Caco-2 (cell line): ENCODE measurements at regions of chr16 and their contacts with region 1.

Region 1: GRCh38 chr16:81444448-81445121 is at the start of gene CMIP:
- DNase-seq: peak; percentile 89 to 96
- H3K4me3 ChIP-seq: peak within 1 kb of the TSS; percentile 92
- H3K4me3 Mint-ChIP-seq: peak within 1 kb of the TSS; percentile 84
- H3K27ac Mint-ChIP-seq: peak within 1 kb of the TSS; percentile 93
- H3K4me1 ChIP-seq: peaks cover 55% of the 10 kb centered on the region
- H3K4me1 Mint-ChIP-seq: peaks cover 34% of the 10 kb centered on the region
- H3K27me3 ChIP-seq: no peaks in the 10 kb centered on the region
- H3K27me3 Mint-ChIP-seq: no peaks in the 10 kb centered on the region
- CTCF ChIP-seq: no peak
- total RNA-seq, gene CMIP: 63.7 and 68.0 TPM in 2 replicates

Region 2: DNA sequence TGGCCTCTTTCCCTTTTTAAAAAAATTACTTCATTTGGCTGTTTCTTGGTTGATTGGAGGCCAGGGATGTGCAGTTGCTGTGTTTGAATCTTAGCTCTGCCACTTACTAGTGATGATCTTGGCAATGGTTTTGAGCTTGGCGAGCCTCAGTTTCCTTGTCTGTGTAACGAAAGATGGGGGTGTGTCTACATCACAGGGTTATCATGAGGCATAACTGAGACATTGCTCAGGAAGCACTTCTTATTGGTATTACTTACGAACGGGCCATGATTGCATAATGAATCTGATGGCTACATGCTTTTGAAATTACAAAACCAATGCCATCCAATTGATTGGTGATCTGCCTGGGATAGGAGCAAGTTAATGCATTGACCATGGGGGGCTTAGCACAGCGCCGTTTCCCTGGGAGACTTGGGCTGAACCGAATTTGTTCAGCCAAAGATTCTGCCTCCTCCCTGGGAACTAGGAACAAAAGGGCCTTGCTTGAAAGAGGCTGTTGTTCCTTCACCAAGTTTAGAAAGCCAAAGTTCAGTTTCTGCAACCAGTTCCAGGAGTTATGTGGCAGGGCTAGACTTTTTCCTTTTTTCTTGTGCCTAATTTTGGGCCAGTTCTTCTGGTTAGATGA is 21.9 kb after region 1 on chr16:
- CTCF ChIA-PET with region 1: no interaction called
- POLR2A ChIA-PET with region 1: no interaction called
- intact Hi-C with region 1: no loop called
- DNase-seq: no peak
- H3K4me3 ChIP-seq: no peak overlapping the region
- H3K4me3 Mint-ChIP-seq: no peak overlapping the region
- H3K27ac Mint-ChIP-seq: peak overlapping the region; percentile 64
- H3K4me1 ChIP-seq: peaks cover 9% of the 10 kb centered on the region
- H3K4me1 Mint-ChIP-seq: peaks cover 40% of the 10 kb centered on the region
- H3K27me3 ChIP-seq: no peaks in the 10 kb centered on the region
- H3K27me3 Mint-ChIP-seq: no peaks in the 10 kb centered on the region
- CTCF ChIP-seq: no peak

Region 3: DNA sequence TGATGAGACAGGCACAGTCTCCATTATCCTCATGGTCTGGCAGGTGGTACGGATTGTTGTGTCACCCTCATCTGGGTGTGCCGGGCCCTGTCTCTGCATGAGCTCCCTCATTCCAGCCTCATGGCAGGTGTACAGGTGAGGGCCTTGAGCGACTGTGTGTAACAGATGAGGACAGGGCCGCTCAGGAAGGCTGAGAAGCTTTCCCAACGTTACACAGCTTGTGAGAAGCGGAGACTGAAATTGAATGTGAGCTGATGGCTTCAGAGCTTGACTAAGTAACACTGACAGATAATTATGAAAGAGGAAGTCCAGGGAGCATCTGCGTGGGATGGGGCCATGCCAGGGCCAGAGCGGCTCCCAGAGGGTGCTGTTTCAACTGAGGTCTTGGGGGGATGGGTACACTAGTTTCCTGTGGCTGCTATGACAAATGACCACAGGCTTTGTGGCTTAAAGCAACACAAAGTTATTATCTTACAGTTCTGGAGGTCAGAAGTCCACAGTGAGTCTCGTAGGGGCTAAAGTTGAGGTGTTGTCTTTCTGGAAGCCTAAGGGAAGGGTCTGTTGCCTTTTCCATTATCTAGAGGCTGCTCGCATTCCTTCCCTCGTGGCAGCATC is 36.7 kb after region 1 on chr16:
- CTCF ChIA-PET with region 1: no interaction called
- POLR2A ChIA-PET with region 1: no interaction called
- intact Hi-C with region 1: loop called (anchors 5 kb)
- DNase-seq: peak; percentile 28 to 61
- H3K4me3 ChIP-seq: no peak overlapping the region
- H3K4me3 Mint-ChIP-seq: peak overlapping the region; percentile 9
- H3K27ac Mint-ChIP-seq: peak overlapping the region; percentile 43
- H3K4me1 ChIP-seq: peaks cover 70% of the 10 kb centered on the region
- H3K4me1 Mint-ChIP-seq: peaks cover 53% of the 10 kb centered on the region
- H3K27me3 ChIP-seq: no peaks in the 10 kb centered on the region
- H3K27me3 Mint-ChIP-seq: no peaks in the 10 kb centered on the region
- CTCF ChIP-seq: peak in 1 of 2 experiments; percentile 4

Region 4: DNA sequence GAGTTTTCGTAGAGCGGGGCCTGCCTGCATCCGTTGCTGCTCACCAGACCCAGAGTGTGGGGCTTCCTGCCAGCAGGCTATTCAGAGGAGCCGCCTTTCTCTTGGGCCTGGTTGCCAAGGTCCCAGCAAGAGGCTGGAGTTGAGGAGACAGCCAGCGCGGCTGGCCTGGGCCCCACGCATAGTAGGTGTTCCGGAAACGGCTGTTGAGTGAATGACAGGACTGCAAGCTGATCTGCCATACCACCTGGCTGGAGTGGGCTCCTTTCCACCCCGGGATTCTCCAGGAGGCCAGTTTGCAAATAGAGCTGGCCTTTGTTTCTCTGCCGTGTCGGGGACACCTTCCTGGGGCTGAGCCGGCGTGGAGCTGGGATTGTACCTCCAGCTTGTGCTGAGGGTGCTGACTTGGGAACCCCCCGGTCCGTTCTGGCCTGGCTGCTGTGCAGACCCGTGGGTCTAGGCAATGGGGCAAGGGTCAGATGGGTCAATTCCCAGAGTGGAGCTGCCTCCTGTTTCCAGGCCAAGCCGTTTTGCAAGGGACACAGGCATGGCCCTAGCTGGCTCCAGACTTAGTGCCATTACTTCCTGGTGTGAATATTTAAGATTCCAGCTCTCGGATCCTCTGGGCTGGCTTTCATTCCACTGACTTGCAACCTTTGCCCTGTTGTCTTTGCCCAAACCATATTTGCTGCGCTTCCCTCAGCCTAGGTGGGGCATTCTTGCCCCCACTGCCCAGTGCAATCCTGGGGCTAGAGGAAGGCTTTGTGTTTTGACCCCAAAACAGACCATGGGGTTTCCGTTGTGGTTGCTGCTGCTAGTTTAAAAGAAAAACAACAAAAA is 68.8 kb after region 1 on chr16:
- CTCF ChIA-PET with region 1: no interaction called
- POLR2A ChIA-PET with region 1: no interaction called
- intact Hi-C with region 1: loop called (anchors 5 kb)
- DNase-seq: peak; percentile 69 to 80
- H3K4me3 ChIP-seq: no peak overlapping the region
- H3K4me3 Mint-ChIP-seq: peak overlapping the region; percentile 16
- H3K27ac Mint-ChIP-seq: peak overlapping the region; percentile 86
- H3K4me1 ChIP-seq: peaks cover 37% of the 10 kb centered on the region
- H3K4me1 Mint-ChIP-seq: peaks cover 22% of the 10 kb centered on the region
- H3K27me3 ChIP-seq: no peaks in the 10 kb centered on the region
- H3K27me3 Mint-ChIP-seq: no peaks in the 10 kb centered on the region
- CTCF ChIP-seq: no peak

Region 5: DNA sequence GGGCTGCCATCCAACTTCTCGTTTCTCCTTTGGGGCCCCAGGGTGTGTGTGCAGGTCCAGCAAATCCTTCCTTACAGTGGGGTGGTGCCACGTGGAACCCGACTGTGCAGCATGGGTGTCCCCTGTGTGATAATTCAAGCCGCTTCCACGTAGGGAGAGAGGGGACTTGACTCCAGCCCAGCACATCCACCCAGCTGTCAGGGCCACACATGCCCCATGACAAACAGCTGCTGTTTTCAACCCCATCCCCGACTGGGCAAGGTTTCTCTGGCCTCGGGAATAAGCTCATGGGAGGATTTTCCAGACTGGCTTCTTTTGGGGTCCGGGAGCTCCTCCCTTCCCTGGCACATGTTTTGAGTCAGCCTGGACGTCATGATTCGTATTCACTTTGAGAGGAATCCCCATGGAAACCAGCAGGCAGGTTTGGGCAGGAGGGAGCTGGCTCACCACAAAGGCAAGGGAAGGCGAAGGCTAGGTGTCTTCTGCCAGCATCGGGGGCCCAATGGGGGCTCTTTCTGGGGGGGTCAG is 156.4 kb after region 1 on chr16:
- CTCF ChIA-PET with region 1: no interaction called
- POLR2A ChIA-PET with region 1: no interaction called
- intact Hi-C with region 1: loop called (anchors 1 kb)
- DNase-seq: no peak
- H3K4me3 ChIP-seq: no peak overlapping the region
- H3K4me3 Mint-ChIP-seq: no peak overlapping the region
- H3K27ac Mint-ChIP-seq: peak overlapping the region; percentile 97
- H3K4me1 ChIP-seq: peaks cover 53% of the 10 kb centered on the region
- H3K4me1 Mint-ChIP-seq: peaks cover 51% of the 10 kb centered on the region
- H3K27me3 ChIP-seq: no peaks in the 10 kb centered on the region
- H3K27me3 Mint-ChIP-seq: no peaks in the 10 kb centered on the region
- CTCF ChIP-seq: no peak